Activated CD8-positive, alpha-beta memory T cell treated with anti-CD3 and anti-CD28 coated beads, Interleukin-2, amount 10 ng/mL, durations not matched to agents 7 days and 5 days (primary cell): ENCODE measurements at regions of chr22 and their contacts with region 1.

Region 1: DNA sequence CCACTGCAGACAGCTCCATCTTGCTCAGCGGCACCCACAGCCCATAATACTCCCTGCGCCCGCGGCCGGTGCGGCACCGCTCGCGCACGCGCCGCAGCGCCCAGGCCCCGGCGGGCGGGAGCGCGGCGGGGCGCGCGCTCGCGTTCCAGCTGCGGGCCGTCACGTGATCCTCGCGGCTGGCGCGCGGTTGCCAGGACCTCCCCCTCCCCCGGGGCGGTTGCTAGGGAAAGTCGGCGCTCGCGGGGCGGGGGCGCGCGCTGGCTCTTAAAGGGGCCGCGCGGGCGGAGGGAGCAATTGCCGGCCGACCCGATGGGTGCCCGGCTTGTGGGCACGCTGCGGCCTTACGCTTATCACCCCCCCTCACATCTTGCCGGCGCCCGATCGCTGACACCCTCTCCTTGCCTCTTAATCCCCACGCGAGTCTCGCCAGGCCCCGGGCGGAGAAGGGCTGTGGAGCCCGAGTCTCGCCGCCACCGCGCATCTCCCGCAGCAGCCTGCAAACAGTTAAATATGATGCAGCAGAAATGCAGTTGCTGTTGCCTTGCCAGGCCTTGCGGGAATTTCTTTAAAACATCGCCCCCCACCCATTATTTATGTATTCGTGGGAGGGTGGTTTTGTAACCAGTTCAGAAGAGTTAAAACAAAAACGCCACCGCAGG is at the start of gene CBX6:
- DNase-seq: peak; percentile 95
- ATAC-seq: peak; percentile 77
- H3K4me3 Mint-ChIP-seq: peak within 1 kb of the TSS; percentile 87
- H3K27ac Mint-ChIP-seq: peak within 1 kb of the TSS; percentile 88
- H3K4me1 Mint-ChIP-seq: peaks cover 47% of the 10 kb centered on the region
- H3K27me3 Mint-ChIP-seq: peaks cover 10% of the 10 kb centered on the region
- total RNA-seq, gene CBX6: 73.1 to 124 TPM

Region 2: DNA sequence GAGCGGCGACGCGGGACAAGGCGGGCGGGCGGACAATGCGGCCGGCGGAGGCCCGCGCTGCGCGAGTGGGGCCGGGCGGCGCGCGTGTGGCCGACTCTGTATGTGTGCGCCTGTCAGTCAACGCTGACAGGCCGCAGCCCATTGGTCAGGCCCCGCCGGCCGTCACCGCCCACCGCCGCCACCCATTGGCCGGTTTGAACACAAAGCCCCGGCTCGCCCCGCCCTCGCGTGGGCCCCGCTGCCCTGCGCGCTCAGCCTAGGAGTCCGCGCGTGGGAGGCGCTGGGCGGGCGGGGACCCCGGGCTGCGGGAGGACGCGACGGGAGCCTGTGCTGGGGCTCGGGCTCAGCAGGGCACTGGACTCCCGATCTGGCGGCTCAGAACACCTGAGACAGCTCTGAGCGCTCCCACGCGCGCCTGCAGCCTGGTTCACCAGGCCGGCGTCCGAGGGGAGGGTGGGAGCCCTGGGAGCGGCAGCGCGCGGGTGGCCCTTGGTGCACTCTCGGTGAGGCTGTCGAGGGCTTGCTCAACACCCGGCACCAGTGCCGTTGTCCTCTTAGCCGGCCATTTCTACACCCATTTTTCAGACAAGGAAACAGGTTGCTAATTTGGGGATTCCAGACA is 116.3 kb before region 1 on chr22 and contains the start of gene SUN2:
- CTCF ChIA-PET with region 1: interaction called, 20 read pairs
- DNase-seq: peak; percentile 96
- ATAC-seq: peak; percentile 79
- H3K4me3 Mint-ChIP-seq: peak within 1 kb of the TSS; percentile 92
- H3K27ac Mint-ChIP-seq: peak within 1 kb of the TSS; percentile 99
- H3K4me1 Mint-ChIP-seq: peaks cover 45% of the 10 kb centered on the region
- H3K27me3 Mint-ChIP-seq: no peaks in the 10 kb centered on the region
- total RNA-seq, gene SUN2: 320 to 412 TPM

Region 3: DNA sequence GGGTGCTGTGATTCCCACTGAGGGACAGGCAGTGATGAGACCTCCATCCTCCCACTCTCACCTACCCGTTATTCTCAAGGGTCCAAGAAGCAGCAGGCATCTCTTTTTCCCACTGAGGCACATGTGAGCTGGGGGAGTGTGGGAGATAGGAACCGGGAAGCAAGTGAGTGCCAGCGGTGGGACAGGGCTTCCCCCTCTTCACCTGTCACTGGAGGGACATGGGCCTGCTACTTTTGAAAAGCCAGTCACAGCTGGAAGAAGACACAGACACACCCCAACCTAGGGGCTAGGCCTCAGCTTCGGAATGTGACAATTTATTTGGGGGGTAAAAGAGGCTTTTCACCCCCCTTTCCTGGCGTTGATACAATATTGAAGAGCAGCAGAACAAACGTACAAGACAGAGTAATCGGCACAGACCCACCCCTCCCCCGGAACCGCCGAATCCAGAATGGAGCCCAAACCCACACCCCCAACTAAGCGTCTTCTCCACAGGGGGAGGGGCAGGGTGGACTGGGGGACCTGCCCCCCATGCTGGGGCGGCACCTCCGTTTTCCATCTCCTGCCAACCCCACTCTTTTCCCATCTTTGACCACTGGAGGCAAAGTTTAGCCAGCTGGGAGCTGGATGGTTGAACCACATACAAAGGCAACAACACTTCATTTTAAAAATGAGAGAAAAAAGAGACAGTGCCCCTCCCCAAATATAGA is 11.0 kb before region 1 on chr22:
- CTCF ChIA-PET with region 1: interaction called, 11 read pairs
- DNase-seq: no peak
- ATAC-seq: no peak
- H3K4me3 Mint-ChIP-seq: no peak overlapping the region
- H3K27ac Mint-ChIP-seq: no peak overlapping the region
- H3K4me1 Mint-ChIP-seq: peaks cover 2% of the 10 kb centered on the region
- H3K27me3 Mint-ChIP-seq: peaks cover 9% of the 10 kb centered on the region

Region 4: GRCh38 chr22:38973289-38974169 is 101.2 kb after region 1 on chr22:
- CTCF ChIA-PET with region 1: interaction called, 47 read pairs
- DNase-seq: peak; percentile 73
- ATAC-seq: peak; percentile 91
- H3K4me3 Mint-ChIP-seq: no peak overlapping the region
- H3K27ac Mint-ChIP-seq: peak overlapping the region; percentile 16
- H3K4me1 Mint-ChIP-seq: peaks cover 12% of the 10 kb centered on the region
- H3K27me3 Mint-ChIP-seq: peaks cover 25% of the 10 kb centered on the region

Region 5: GRCh38 chr22:39013942-39014722 is 141.8 kb after region 1 on chr22 and contains the start of gene APOBEC3C:
- CTCF ChIA-PET with region 1: interaction called, 171 read pairs
- DNase-seq: peak; percentile 95
- ATAC-seq: peak; percentile 97
- H3K4me3 Mint-ChIP-seq: peak within 1 kb of the TSS; percentile 87
- H3K27ac Mint-ChIP-seq: peak within 1 kb of the TSS; percentile 96
- H3K4me1 Mint-ChIP-seq: peaks cover 37% of the 10 kb centered on the region
- H3K27me3 Mint-ChIP-seq: no peaks in the 10 kb centered on the region
- total RNA-seq, gene APOBEC3C: 147 to 176 TPM

Region 6: DNA sequence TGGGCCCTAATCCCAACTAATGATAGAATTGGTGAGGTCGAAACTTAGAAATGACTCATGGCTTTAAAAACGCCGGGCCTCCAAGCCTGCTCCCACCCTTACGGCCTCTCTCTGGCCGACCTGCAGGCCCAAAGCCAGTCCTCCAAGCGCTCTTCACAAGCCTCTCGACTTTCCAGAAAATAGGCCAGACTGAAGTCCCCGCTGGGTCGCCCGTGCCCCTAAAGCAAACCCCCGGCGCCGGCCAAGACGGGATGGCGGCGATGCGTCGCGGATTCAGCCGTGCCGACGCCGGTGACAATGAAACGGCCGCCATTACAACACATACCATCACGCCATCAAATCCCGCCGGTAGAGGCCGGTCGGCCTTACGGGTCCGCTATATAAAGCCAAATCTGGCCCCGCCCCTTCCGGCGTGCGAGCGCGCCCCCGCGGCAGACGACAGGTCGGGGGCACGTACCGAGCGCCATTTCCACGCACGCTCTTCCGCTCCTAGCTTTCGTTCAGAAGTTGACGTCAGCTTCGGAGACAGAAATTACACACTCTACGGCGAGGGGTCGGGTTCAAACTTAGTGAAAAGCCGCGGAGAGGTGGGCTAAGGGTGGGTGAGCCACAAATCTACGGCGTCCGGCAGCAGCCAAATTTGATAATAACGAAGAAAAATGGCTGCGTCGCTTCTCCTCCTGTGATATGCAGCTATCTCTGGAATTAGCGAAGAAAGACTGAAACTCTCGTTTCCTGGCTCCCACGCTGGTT is 447.1 kb after region 1 on chr22 and contains the start of gene RPL3:
- CTCF ChIA-PET with region 1: interaction called, 32 read pairs
- DNase-seq: peak; percentile 97
- ATAC-seq: peak; percentile 82
- H3K4me3 Mint-ChIP-seq: peak within 1 kb of the TSS; percentile 99
- H3K27ac Mint-ChIP-seq: peak within 1 kb of the TSS; percentile 92
- H3K4me1 Mint-ChIP-seq: peaks cover 45% of the 10 kb centered on the region
- H3K27me3 Mint-ChIP-seq: no peaks in the 10 kb centered on the region
- total RNA-seq, gene RPL3: 1,571 to 1,769 TPM